Left cardiac atrium (tissue), 4 donors: ENCODE measurements at regions of chr3 and their contacts with region 1.

Region 1: GRCh38 chr3:132722164-132723024 is at the start of gene NPHP3:
- DNase-seq: peak; percentile 98
- ATAC-seq: peak; percentile 91 to 95
- total RNA-seq, gene NPHP3: 8.9 to 11.6 TPM

Region 2: GRCh38 chr3:133424937-133425869 is 702.8 kb after region 1 on chr3:
- intact Hi-C with region 1: loop called in 1 of 2 experiments (anchors 5 kb)
- DNase-seq: no peak
- ATAC-seq: no peak

Region 3: GRCh38 chr3:133573054-133573628 is 850.7 kb after region 1 on chr3:
- intact Hi-C with region 1: loop called in 1 of 2 experiments (anchors 5 kb)
- DNase-seq: peak; percentile 100
- ATAC-seq: peak; percentile 93